ENCODE measurements at regions of chr13 and their contacts with region 1.

Region 1: GRCh38 chr13:51803422-51804294 is at the start of gene DHRS12:
- DNase-seq: peak; percentile 97
- H3K4me3 ChIP-seq: peak within 1 kb of the TSS; percentile 52 to 83 (median 67)
- H3K27ac ChIP-seq: peak within 1 kb of the TSS; percentile 91 to 99 (median 97)
- H3K4me1 ChIP-seq: peaks cover 0 to 54% (median 45%) of the 10 kb centered on the region in 4 donors
- H3K27me3 ChIP-seq: no peaks in the 10 kb centered on the region
- CTCF ChIP-seq: no peak
- EP300 ChIP-seq: peak in 2 of 4 donors; percentile 31 to 45
- POLR2A ChIP-seq: peak; percentile 83 to 86
- total RNA-seq, gene DHRS12: 11.4 to 26.9 (median 14.9) TPM

Region 2: GRCh38 chr13:51729866-51730546 is 73.7 kb before region 1 on chr13:
- intact Hi-C with region 1: loop called (anchors 5 kb)
- DNase-seq: peak; percentile 86
- H3K4me3 ChIP-seq: peak overlapping the region in 3 of 4 donors; percentile 3 to 26 (median 19)
- H3K27ac ChIP-seq: peak overlapping the region; percentile 63 to 79 (median 74)
- H3K4me1 ChIP-seq: peaks cover 0 to 36% (median 33%) of the 10 kb centered on the region in 4 donors
- H3K27me3 ChIP-seq: no peaks in the 10 kb centered on the region
- CTCF ChIP-seq: no peak
- EP300 ChIP-seq: no peak
- POLR2A ChIP-seq: no peak

Region 3: GRCh38 chr13:51955281-51955771 is 151.7 kb after region 1 on chr13:
- intact Hi-C with region 1: no loop called
- DNase-seq: no peak
- H3K4me3 ChIP-seq: no peak overlapping the region
- H3K27ac ChIP-seq: no peak overlapping the region
- H3K4me1 ChIP-seq: no peaks in the 10 kb centered on the region
- H3K27me3 ChIP-seq: no peaks in the 10 kb centered on the region
- CTCF ChIP-seq: no peak
- EP300 ChIP-seq: no peak
- POLR2A ChIP-seq: no peak